Mammary epithelial cell (primary cell): ENCODE measurements at regions of chr7 and their contacts with region 1.

Region 1: DNA sequence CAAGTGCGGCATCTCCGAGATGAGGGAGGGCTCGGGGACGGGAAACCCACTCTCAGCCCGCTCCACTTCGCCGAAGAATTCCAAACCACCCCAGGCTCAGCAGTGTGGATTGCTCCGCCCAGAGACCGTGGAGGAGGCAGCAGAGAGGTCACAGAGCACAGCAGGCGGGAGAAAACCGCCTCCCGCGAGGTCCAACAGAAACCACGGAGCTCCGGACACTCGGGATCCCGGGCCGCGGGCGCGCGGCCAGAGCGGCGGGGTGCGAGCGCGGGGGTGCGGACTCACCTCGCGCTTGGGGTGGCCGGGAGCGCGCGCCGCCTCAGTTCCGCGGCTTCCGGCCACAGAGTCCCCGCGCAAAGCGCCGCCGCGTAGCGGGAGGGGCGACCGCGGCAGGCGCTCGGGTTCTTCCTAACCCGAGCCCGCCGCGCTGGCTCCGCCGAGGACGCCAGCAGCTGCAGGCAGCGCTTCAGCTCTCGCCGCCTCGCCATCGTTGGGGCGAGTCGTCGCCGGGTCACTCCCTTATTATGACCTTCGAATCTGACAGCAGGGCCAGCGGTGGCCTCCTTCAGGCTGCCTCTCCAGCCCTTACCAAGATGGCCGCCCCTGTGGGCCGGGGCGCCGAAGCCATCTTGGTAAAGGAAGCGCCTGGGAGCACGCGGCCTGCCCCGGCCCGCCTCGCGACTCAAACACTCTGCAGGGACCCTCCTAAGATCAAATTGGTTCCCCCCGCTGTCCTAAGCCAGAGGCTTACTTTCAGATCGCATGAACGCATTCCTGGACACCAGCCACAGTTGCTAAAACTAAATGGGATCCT is at the start of gene NAPEPLD:
- DNase-seq: peak; percentile 75
- H3K4me3 ChIP-seq: peak within 1 kb of the TSS; percentile 63 to 86 (median 76)
- H3K27ac ChIP-seq: peak within 1 kb of the TSS; percentile 77
- H3K4me1 ChIP-seq: peaks cover 12% of the 10 kb centered on the region
- H3K27me3 ChIP-seq: no peaks in the 10 kb centered on the region
- CTCF ChIP-seq: no peak
- total RNA-seq, gene NAPEPLD: 5.7 to 11.3 TPM

Region 2: DNA sequence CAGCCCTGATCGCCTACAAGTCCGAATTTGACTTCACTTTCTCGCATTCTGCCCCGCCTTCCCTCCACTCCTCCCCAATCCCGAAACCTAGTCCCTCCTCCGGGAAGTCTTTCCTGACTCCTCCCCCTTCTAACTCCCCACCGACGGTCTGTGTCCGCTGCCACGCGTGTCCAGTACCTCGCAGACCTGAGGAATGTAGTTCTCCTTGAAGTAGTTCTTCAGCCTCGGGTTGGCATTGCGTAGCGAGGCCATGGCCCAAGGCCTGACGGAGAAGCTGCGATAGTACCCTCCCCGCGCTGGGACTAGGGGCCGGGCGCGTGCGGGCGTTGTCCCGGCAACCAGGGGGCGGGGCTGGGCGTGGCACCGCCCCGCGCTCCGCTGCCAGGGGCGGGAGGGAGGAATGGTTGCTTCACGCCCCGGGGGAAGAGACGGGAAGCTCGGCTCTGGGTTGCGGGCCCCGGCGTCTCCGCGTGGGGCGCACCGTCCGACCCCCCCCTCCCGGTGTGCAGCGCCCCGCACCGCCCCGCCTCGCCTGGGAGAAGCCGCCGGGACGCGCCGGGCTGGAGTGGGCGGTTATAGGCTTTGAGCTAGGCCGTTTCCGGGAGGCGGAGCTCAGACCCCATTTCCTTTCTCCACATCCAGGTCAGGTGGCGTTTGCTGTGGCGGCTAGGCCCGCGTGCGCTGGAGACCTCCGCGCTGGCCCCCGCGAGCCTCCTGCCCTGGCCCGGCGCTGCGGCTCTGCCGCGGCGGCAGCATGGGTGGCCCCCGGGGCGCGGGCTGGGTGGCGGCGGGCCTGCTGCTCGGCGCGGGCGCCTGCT is 74.5 kb before region 1 on chr7 and contains the starts of genes ARMC10 and FBXL13:
- CTCF ChIA-PET with region 1: no interaction called
- dilution Hi-C with region 1: no loop called
- in situ Hi-C with region 1: no loop called
- intact Hi-C with region 1: loop called (anchors 1 kb)
- DNase-seq: peak; percentile 93
- H3K4me3 ChIP-seq: peak within 1 kb of the TSS; percentile 71 to 97 (median 81)
- H3K27ac ChIP-seq: peak within 1 kb of the TSS; percentile 85
- H3K4me1 ChIP-seq: peaks cover 15% of the 10 kb centered on the region
- H3K27me3 ChIP-seq: no peaks in the 10 kb centered on the region
- CTCF ChIP-seq: peak; percentile 6 to 42
- total RNA-seq, gene ARMC10: 44.2 to 52.7 TPM
- total RNA-seq, gene FBXL13: 0.78 to 1.3 TPM

Region 3: DNA sequence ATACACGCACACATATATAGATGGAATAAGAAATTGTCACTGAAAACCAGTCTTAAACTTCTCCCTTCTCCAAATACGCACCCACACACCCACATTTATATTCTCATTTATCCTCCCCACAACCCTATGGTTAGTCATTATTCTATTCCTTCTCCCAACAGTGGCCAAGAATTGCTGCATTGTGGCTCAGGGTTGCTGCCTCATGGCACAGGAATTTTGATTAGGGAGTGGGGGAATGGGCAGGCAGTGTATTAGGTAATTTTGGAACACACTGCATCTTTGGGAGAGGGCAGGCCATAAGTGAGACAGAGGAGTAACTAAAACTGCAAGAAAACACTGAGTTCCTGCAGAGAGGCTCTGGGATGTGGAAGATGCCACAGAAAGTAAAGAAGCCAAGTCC is 36.0 kb before region 1 on chr7:
- CTCF ChIA-PET with region 1: no interaction called
- dilution Hi-C with region 1: no loop called
- in situ Hi-C with region 1: no loop called
- intact Hi-C with region 1: loop called (anchors 2 kb)
- DNase-seq: peak; percentile 98
- H3K4me3 ChIP-seq: peak overlapping the region in 1 of 3 experiments; percentile 4
- H3K27ac ChIP-seq: peak overlapping the region; percentile 85
- H3K4me1 ChIP-seq: peaks cover 13% of the 10 kb centered on the region
- H3K27me3 ChIP-seq: no peaks in the 10 kb centered on the region
- CTCF ChIP-seq: no peak